ENCODE measurements at regions of chr17 and their contacts with region 1.

Region 1: GRCh38 chr17:70405492-70406220 is 236.3 kb downstream of the KCNJ2 start:
- DNase-seq: peak in 1 of 9 experiments; percentile 1
- ATAC-seq: no peak
- H3K4me3 ChIP-seq: no peak overlapping the region
- H3K4me3 Mint-ChIP-seq: no peak overlapping the region
- H3K27ac ChIP-seq: no peak overlapping the region
- H3K27ac Mint-ChIP-seq: no peak overlapping the region
- H3K4me1 ChIP-seq: no peaks in the 10 kb centered on the region
- H3K4me1 Mint-ChIP-seq: no peaks in the 10 kb centered on the region
- H3K27me3 ChIP-seq: no peaks in the 10 kb centered on the region
- H3K27me3 Mint-ChIP-seq: no peaks in the 10 kb centered on the region
- CTCF ChIP-seq: no peak

Region 2: DNA sequence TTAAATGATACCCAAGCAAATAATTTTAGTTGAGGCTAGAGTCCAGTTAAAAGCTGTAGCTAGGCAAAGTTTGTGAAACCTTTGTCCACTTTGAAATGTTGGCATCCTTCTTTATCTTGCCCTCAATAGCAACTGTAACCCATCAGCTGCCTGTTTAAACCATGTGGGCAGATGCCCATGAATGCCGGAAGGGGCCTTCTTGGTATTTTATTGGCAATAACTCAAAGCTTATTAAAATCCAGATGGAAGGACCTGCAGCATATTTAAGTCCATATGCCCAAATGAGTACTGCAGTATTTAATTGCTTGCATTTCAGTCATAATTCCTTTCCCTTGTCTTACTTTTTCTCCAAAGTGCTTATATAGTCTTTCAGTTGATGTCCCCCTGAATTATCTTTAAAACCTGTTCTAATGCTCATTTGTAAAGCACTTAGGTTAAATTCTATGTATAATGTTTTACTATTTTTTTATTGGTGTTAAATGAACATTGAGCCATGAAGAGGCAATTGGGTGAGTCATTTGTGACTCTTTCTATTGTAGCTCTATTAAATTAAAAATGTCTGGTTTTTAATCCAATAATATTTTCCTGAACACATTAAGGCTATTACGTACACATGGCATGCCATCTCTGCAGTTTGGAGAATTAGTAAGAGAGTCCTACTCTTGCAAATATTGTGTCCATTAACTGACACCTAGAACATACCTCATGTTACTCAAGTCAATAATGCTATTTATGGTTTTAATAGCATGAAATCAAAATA is 11.0 kb before region 1 on chr17:
- CTCF ChIA-PET with region 1: no interaction called
- POLR2A ChIA-PET with region 1: no interaction called
- intact Hi-C with region 1: loop called in 1 of 2 experiments (anchors 2 kb)
- DNase-seq: no peak
- ATAC-seq: no peak
- H3K4me3 ChIP-seq: no peak overlapping the region
- H3K4me3 Mint-ChIP-seq: no peak overlapping the region
- H3K27ac ChIP-seq: no peak overlapping the region
- H3K27ac Mint-ChIP-seq: no peak overlapping the region
- H3K4me1 ChIP-seq: no peaks in the 10 kb centered on the region
- H3K4me1 Mint-ChIP-seq: no peaks in the 10 kb centered on the region
- H3K27me3 ChIP-seq: no peaks in the 10 kb centered on the region
- H3K27me3 Mint-ChIP-seq: peaks cover 4% of the 10 kb centered on the region
- CTCF ChIP-seq: no peak

Measured in CD8-positive, alpha-beta T cell (primary cell).